PC-3 (cell line): ENCODE measurements at regions of chr11 and their contacts with region 1.

Region 1: GRCh38 chr11:3378426-3379423 is at the start of gene ZNF195:
- DNase-seq: peak; percentile 96
- ATAC-seq: peak; percentile 100
- H3K4me3 ChIP-seq: peak within 1 kb of the TSS; percentile 100
- H3K27ac ChIP-seq: peak within 1 kb of the TSS; percentile 33
- H3K4me1 ChIP-seq: peaks cover 12% of the 10 kb centered on the region
- H3K27me3 ChIP-seq: no peaks in the 10 kb centered on the region
- CTCF ChIP-seq: no peak
- total RNA-seq, gene ZNF195: 45.8 and 47.9 TPM in 2 replicates

Region 2: DNA sequence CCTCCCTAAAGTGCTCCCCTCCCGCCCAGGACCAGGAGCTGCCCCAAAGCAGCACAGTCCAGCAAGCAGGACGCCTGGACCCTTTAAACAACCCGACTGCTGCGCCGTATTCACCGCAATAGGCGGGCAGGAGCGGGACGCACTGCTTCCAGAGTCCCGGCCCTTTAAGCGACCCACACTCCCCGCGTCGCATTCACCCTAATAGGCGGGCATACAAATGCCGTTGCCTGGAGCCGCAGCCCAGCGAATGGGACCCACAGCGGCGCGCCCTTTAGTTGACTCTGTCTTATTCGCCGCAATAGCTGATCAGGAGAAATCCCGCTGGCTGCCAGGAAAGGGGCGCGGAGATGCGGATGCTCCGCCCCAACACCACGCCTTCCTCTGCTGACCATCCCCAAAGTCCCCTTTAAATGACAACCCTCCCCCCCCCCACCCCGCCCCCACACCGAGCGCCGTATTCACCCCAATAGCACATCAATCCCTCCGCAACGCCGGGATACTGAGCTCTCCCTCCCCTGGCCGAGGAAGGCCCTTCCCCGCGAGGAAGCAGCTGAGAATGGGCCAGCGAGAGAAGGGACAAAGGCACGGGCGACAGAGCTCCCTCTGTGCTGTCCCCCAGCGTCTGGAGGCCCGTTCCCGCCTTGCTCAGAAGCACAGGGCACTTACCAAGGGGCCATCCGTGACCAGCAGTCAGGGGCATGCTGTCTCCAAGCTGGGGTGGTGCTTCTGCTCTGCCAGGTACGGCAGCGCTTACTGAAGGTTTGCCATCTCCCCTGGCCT is 218.3 kb before region 1 on chr11:
- CTCF ChIA-PET with region 1: no interaction called
- POLR2A ChIA-PET with region 1: no interaction called
- intact Hi-C with region 1: loop called (anchors 10 kb)
- DNase-seq: no peak
- ATAC-seq: no peak
- H3K4me3 ChIP-seq: no peak overlapping the region
- H3K27ac ChIP-seq: no peak overlapping the region
- H3K4me1 ChIP-seq: peaks cover 3% of the 10 kb centered on the region; the same call in 1 of the 2 replicates
- H3K27me3 ChIP-seq: no peaks in the 10 kb centered on the region
- CTCF ChIP-seq: no peak

Region 3: GRCh38 chr11:3177931-3178330 is 200.8 kb before region 1 on chr11:
- CTCF ChIA-PET with region 1: no interaction called
- POLR2A ChIA-PET with region 1: no interaction called
- intact Hi-C with region 1: no loop called
- DNase-seq: peak; percentile 59
- ATAC-seq: no peak
- H3K4me3 ChIP-seq: no peak overlapping the region
- H3K27ac ChIP-seq: no peak overlapping the region
- H3K4me1 ChIP-seq: no peaks in the 10 kb centered on the region
- H3K27me3 ChIP-seq: no peaks in the 10 kb centered on the region
- CTCF ChIP-seq: no peak

Region 4: GRCh38 chr11:3217676-3218482 is 160.8 kb before region 1 on chr11:
- CTCF ChIA-PET with region 1: no interaction called
- POLR2A ChIA-PET with region 1: no interaction called
- intact Hi-C with region 1: no loop called
- DNase-seq: no peak
- ATAC-seq: no peak
- H3K4me3 ChIP-seq: no peak overlapping the region
- H3K27ac ChIP-seq: no peak overlapping the region
- H3K4me1 ChIP-seq: no peaks in the 10 kb centered on the region
- H3K27me3 ChIP-seq: peaks cover 30% of the 10 kb centered on the region
- CTCF ChIP-seq: no peak